Left cardiac atrium (tissue), 4 donors: ENCODE measurements at regions of chr22 and their contacts with region 1.

Region 1: GRCh38 chr22:48492366-48493320 is 1335.0 kb downstream of the BRD1 start:
- DNase-seq: peak; percentile 58
- ATAC-seq: peak; percentile 66 to 72

Region 2: GRCh38 chr22:46798366-46799350 is 1694.0 kb before region 1 on chr22:
- intact Hi-C with region 1: loop called in 1 of 2 experiments (anchors 5 kb)
- DNase-seq: peak; percentile 79
- ATAC-seq: peak; percentile 75 to 86